ENCODE measurements at regions of chr6 and their contacts with region 1.

Region 1: DNA sequence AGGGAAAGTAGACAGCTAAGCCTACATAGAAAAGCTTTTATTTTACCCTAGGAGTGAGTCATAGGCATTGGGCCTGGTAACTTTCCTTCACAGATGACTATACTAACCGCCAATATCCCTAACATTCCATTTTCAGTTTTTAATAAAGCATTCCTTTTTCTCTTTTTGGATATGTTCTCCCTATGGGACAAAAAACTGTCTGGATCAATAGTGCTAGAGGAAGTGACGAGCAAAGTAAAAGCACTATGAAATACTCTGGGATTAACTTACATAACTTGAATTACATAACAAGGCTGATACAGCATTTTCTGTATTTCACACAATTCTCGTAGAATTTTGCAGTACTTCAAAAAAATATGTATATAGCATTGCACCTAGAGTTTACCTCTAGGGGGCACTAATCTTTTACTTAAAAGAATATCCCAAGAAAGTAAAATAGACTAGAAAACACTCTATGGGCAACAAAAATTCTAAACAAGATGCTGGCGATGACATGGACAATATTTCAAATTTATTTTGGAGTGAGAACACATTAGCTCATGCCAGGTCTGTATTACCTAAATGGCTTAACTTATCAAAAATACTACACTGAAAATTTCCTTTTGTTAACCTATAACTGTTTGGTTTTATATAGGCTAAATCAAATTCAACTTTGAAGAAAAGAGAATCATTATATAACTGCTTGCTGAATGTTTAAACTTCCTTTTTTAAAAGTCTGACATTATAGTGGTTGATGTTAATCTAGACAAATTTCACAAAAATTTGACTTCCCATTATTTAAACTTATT is 66.3 kb upstream of the DST start:
- DNase-seq: no peak
- H3K4me3 ChIP-seq: no peak overlapping the region
- H3K27ac ChIP-seq: no peak overlapping the region
- H3K4me1 ChIP-seq: peaks cover 3% of the 10 kb centered on the region
- H3K27me3 ChIP-seq: no peaks in the 10 kb centered on the region
- CTCF ChIP-seq: peak in 1 of 3 donors; percentile 35
- EP300 ChIP-seq: no peak
- POLR2A ChIP-seq: no peak

Region 2: DNA sequence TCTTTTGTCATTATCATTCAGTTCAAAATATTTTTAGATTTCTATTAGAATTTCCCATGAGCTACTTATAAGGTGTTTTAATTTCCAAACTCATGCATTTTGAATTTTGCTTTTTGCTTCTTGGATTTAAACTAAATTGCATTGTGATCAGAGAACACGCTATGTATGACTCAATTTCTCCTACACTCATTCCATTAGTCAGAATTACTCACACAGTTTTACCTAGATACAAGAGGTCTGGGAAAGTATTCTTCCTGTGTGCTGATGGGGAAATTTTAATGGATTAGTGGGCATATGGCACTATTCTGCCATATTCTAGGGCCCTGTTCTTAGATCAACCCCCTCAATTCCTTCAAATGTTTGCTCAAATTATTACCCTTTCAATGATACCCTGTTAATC is 783.7 kb before region 1 on chr6:
- intact Hi-C with region 1: no loop called
- DNase-seq: no peak
- H3K4me3 ChIP-seq: no peak overlapping the region
- H3K27ac ChIP-seq: no peak overlapping the region
- H3K4me1 ChIP-seq: no peaks in the 10 kb centered on the region
- H3K27me3 ChIP-seq: no peaks in the 10 kb centered on the region
- CTCF ChIP-seq: no peak
- EP300 ChIP-seq: no peak
- POLR2A ChIP-seq: no peak

Region 3: DNA sequence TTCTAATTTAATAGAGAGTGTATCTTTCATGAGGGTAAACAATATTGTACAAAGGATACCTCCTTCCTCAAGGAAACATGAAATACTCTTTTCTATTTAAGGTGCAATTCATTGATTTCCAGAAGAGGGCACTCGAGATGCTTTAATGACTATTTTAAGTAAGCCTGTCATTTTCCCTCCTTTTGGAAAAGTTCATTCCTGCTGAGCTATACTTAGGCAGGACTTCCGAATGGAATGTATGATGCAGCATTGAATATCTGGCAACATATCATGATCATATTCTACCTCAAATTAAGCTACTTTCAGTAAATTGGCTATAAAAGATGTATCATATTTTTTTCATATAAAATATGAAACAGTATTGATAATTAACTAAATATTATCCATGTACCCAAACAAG is 71.4 kb before region 1 on chr6:
- intact Hi-C with region 1: loop called in 1 of 4 experiments (anchors 5 kb)
- DNase-seq: no peak
- H3K4me3 ChIP-seq: no peak overlapping the region
- H3K27ac ChIP-seq: no peak overlapping the region
- H3K4me1 ChIP-seq: no peaks in the 10 kb centered on the region
- H3K27me3 ChIP-seq: no peaks in the 10 kb centered on the region
- CTCF ChIP-seq: peak; percentile 48 to 68 (median 67)
- EP300 ChIP-seq: no peak
- POLR2A ChIP-seq: no peak

Region 4: DNA sequence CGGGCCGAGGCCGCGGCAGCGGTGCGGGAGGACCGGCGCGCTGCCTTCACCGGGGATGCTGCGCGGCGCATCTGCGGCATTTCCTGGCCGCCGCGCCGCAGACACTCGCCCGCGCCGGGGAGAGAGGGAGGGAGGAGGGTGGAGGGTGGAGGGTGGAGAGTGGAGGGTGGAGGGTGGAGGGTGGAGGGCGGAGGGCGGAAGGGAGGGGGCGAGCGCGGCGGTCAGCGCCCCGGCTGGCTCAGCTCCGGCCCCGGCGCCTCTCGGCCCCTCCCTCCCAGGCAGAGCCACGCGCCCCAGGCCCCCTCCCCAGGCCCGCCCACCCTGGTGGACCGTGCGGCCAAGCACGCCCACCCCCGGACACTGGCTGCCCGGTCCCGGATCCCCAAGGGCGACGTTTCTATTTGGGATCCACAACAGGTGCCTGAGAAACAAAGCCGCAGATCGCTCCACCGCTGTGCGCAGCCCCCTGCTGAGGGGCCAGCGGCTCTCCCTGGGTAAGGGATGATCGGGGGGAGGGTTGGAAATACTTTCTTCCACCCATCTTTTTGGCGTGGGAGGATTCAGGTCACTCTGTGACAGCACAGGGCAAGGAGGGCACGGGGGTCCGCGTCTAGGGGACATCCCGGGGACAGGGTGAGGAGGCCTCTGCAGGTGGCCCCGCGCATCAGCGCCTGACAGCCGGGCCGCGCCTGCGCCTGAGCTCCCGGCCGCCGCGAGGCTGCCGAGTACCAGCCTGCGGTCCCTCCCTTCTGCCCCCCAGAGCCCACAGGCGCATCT is 134.8 kb after region 1 on chr6:
- intact Hi-C with region 1: loop called in 2 of 4 experiments (anchors 10 kb)
- DNase-seq: peak; percentile 48 to 74 (median 66)
- H3K4me3 ChIP-seq: peak overlapping the region; percentile 75
- H3K27ac ChIP-seq: peak overlapping the region; percentile 32 to 79
- H3K4me1 ChIP-seq: no peaks in the 10 kb centered on the region
- H3K27me3 ChIP-seq: no peaks in the 10 kb centered on the region
- CTCF ChIP-seq: peak in 1 of 3 donors; percentile 46
- EP300 ChIP-seq: no peak
- POLR2A ChIP-seq: peak; percentile 33

Region 5: GRCh38 chr6:56851541-56852259 is 142.7 kb after region 1 on chr6:
- intact Hi-C with region 1: loop called (anchors 5 to 10 kb)
- DNase-seq: peak; percentile 28 to 60 (median 36)
- H3K4me3 ChIP-seq: peak overlapping the region; percentile 38
- H3K27ac ChIP-seq: peak overlapping the region; percentile 31 to 51
- H3K4me1 ChIP-seq: peaks cover 5% of the 10 kb centered on the region
- H3K27me3 ChIP-seq: no peaks in the 10 kb centered on the region
- CTCF ChIP-seq: peak in 2 of 3 donors; percentile 73 to 80
- EP300 ChIP-seq: no peak
- POLR2A ChIP-seq: no peak